ENCODE measurements at regions of chr1 and their contacts with region 1.

Region 1: DNA sequence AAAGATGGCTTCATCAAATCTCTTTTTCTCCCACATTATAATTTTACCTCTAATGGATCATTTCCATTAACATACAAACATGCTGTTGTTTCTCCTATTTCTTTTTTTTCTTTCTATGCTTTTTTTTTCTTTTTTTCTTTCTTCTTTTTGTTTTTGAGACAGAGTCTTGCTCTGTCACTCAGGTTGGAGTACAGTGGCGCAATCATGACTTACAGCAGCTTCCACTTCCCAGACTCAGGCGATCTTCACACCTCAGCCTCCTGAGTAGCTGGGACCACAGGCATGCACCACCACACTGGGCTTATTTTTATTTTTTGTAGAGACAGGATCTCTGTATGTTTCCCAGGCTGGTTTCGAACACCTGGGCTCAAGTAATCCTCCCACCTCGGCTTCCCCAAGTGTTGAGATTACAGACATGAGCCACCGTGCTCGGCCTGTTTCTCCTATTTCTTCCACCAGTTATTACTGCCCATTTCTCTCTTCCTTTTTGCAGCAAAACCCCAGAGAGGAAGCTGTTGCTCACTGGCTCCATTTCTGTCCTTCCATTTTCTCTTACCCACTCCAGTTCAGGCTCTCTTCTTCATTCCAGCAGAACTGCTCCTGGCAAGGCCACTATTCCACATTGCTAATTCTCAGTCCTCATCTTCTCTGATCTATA is 32.1 kb upstream of the OPRD1 start:
- DNase-seq: no peak
- ATAC-seq: no peak
- H3K4me3 ChIP-seq: no peak overlapping the region
- H3K27ac ChIP-seq: no peak overlapping the region
- H3K4me1 ChIP-seq: peaks cover 6% of the 10 kb centered on the region
- H3K27me3 ChIP-seq: no peaks in the 10 kb centered on the region
- CTCF ChIP-seq: no peak

Region 2: DNA sequence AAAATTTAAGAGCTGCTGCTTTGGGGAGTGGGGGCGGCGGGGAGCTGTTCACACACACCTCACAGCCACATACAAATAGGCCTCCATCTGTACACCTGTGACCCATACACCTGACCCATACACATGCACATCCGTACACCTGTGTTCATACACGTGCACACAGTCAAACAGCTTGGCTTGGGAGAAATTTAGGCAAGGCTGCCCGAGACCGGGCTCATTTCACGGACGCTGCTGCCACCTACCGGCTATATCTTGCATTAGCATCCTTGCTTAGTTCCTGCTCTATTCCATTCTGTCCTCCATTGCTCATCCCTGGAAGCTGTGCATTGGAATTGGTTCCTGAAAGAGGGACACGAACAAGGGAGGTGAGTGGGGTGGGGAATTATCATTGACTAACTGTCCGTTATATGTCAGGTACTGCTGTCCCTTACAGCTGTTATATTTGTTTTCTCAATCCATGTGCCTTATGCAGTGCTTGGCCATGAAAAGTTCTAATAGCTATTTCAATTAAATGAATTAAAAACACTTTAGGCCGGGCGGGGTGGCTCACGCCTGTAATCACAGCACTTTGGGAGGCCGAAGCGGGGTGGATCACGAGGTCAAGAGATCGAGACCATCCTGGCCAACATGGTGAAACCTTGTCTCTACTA is 97.4 kb after region 1 on chr1:
- intact Hi-C with region 1: loop called (anchors 1 to 2 kb)
- DNase-seq: peak; percentile 67 to 85
- ATAC-seq: peak; percentile 83 to 88 (median 84)
- H3K4me3 ChIP-seq: no peak overlapping the region
- H3K27ac ChIP-seq: no peak overlapping the region
- H3K4me1 ChIP-seq: peaks cover 1% of the 10 kb centered on the region
- H3K27me3 ChIP-seq: no peaks in the 10 kb centered on the region
- CTCF ChIP-seq: peak; percentile 96

Region 3: DNA sequence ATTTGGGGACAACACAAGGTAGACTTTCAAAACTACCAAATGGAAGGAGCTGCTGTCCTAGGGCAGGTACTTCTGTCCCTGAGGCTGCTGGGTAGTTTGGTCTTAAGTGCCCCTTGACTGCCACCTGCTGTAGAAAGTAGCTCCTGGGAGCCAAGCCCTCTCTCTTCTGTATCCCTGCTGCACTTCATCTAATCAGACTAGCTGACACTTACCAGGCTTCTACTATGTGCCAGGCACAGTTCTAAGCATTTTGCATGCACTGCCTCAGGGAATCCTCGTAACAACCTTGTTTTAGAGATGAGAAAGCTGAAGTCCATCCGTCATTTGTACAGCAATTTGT is 417.7 kb after region 1 on chr1:
- intact Hi-C with region 1: loop called in 1 of 2 experiments (anchors 10 kb)
- DNase-seq: no peak
- ATAC-seq: peak in 2 of 4 donors; percentile 29 to 37
- H3K4me3 ChIP-seq: no peak overlapping the region
- H3K27ac ChIP-seq: no peak overlapping the region
- H3K4me1 ChIP-seq: peaks cover 12% of the 10 kb centered on the region
- H3K27me3 ChIP-seq: no peaks in the 10 kb centered on the region
- CTCF ChIP-seq: peak; percentile 9